ENCODE measurements at regions of chr16 and their contacts with region 1.

Region 1: GRCh38 chr16:35449663-35450062 is 1990.3 kb downstream of the TP53TG3F start:
- DNase-seq: no peak
- ATAC-seq: no peak
- H3K4me3 ChIP-seq: no peak overlapping the region
- H3K27ac ChIP-seq: no peak overlapping the region
- H3K4me1 ChIP-seq: no peaks in the 10 kb centered on the region
- H3K27me3 ChIP-seq: no peaks in the 10 kb centered on the region
- CTCF ChIP-seq: no peak
- POLR2A ChIP-seq: no peak
- RAD21 ChIP-seq: no peak

Region 2: DNA sequence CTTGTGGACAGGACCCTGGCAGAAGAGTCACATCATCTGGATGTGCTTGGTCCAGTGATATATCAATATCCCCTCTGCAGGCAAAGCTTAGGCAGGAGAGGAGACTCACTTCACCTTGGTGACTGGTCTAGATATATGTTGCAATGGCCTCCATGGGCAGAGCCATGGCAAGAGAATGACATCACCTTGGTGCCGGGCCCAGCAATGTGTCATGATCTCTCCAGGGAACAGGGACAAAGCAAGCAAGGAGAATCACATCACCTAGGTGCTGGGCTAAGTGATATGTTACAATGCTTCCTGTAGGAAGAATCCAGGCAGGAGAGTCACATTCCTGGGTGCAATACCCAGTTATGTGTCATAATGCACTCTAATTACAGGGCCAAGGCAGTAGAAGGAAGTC is 116.0 kb after region 1 on chr16:
- CTCF ChIA-PET with region 1: no interaction called
- POLR2A ChIA-PET with region 1: no interaction called
- dilution Hi-C with region 1: no loop called
- in situ Hi-C with region 1: no loop called
- intact Hi-C with region 1: no loop called
- DNase-seq: no peak
- ATAC-seq: no peak
- H3K4me3 ChIP-seq: no peak overlapping the region
- H3K27ac ChIP-seq: no peak overlapping the region
- H3K4me1 ChIP-seq: no peaks in the 10 kb centered on the region
- H3K27me3 ChIP-seq: no peaks in the 10 kb centered on the region
- CTCF ChIP-seq: no peak
- POLR2A ChIP-seq: no peak
- RAD21 ChIP-seq: no peak

Region 3: DNA sequence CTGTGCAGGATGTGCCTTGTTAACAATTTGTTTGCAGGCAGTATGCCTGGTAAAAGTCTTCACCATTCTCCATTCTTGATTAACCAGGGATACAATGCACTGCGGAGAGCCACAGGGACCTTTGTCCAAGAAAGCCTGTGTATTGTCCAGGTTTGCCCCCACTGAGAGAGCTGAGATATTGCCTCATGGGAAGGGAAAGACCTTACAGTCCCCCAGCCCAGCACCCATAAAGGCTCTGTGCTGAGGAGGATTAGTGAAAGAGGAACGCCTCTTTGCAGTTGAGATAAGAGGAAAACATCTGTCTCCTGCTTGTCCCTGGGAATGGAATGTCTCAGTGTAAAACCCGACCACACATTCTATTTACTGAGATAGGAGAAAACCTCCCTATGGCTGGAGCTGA is 179.3 kb after region 1 on chr16:
- CTCF ChIA-PET with region 1: no interaction called
- POLR2A ChIA-PET with region 1: no interaction called
- dilution Hi-C with region 1: no loop called
- in situ Hi-C with region 1: loop called (anchors 10 kb)
- intact Hi-C with region 1: no loop called
- DNase-seq: no peak
- ATAC-seq: no peak
- H3K4me3 ChIP-seq: no peak overlapping the region
- H3K27ac ChIP-seq: no peak overlapping the region
- H3K4me1 ChIP-seq: no peaks in the 10 kb centered on the region
- H3K27me3 ChIP-seq: no peaks in the 10 kb centered on the region
- CTCF ChIP-seq: no peak
- POLR2A ChIP-seq: no peak
- RAD21 ChIP-seq: no peak